ENCODE measurements at regions of chr1 and their contacts with region 1.

Region 1: DNA sequence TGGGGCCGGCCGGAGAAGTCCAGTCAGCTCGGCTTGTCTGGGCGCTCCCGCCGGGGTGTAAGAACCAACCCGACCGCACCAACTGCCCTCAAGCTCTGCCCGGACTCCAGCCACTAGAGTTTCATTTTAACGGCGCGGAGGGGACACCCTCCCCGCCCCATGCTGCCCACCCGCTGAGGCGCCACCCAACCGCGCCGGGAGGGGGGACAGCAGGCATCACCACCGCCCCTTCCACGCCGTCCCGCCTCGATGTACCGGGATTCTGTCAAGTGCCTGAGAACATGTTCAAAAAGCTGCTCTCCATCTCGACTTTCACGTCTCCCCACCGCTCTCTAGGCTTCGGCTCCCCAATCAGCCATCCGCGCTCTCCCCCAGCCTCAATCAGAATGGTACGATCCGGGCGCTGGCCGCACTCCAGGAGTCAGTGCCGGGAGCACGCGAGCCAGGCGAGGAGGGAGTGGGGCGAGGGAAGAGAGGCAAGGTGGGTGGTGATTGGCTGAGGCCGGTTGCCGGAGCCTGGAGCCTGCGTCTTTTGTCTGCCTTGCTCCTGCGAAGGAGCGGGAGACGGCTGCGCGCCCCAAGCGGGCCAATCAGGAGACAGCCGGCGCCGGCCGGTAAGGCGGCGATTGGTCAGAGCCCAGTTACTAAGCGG is at the start of gene PIK3R3:
- DNase-seq: peak; percentile 92
- ATAC-seq: peak; percentile 91
- H3K4me3 ChIP-seq: peak within 1 kb of the TSS; percentile 91
- H3K27ac ChIP-seq: peak within 1 kb of the TSS; percentile 98
- H3K4me1 ChIP-seq: peaks cover 16% of the 10 kb centered on the region
- H3K27me3 ChIP-seq: no peaks in the 10 kb centered on the region
- CTCF ChIP-seq: no peak
- EP300 ChIP-seq: peak; percentile 16 to 41; a peak in 2 of 4 replicates
- POLR2A ChIP-seq: peak; percentile 99
- RAD21 ChIP-seq: no peak
- polyA plus RNA-seq, gene PIK3R3: 4.8 to 7.4 TPM

Region 2: GRCh38 chr1:46043458-46044017 is 89.1 kb before region 1 on chr1:
- CTCF ChIA-PET with region 1: interaction called, 5 read pairs
- POLR2A ChIA-PET with region 1: interaction called, 14 read pairs
- RAD21 ChIA-PET with region 1: interaction called, 5 read pairs
- SMC1A ChIA-PET with region 1: interaction called, 37 read pairs
- in situ Hi-C with region 1: no loop called
- intact Hi-C with region 1: loop called (anchors 2 kb)
- DNase-seq: peak; percentile 92
- ATAC-seq: peak; percentile 97
- H3K4me3 ChIP-seq: no peak overlapping the region
- H3K27ac ChIP-seq: peak overlapping the region; percentile 80
- H3K4me1 ChIP-seq: peaks cover 35% of the 10 kb centered on the region
- H3K27me3 ChIP-seq: no peaks in the 10 kb centered on the region
- CTCF ChIP-seq: no peak
- EP300 ChIP-seq: peak in 1 of 2 experiments; percentile 54; a peak in 2 of 4 replicates
- POLR2A ChIP-seq: peak; percentile 52; the same call in 1 of the 2 replicates
- RAD21 ChIP-seq: no peak; the same call in 1 of the 2 replicates

Region 3: DNA sequence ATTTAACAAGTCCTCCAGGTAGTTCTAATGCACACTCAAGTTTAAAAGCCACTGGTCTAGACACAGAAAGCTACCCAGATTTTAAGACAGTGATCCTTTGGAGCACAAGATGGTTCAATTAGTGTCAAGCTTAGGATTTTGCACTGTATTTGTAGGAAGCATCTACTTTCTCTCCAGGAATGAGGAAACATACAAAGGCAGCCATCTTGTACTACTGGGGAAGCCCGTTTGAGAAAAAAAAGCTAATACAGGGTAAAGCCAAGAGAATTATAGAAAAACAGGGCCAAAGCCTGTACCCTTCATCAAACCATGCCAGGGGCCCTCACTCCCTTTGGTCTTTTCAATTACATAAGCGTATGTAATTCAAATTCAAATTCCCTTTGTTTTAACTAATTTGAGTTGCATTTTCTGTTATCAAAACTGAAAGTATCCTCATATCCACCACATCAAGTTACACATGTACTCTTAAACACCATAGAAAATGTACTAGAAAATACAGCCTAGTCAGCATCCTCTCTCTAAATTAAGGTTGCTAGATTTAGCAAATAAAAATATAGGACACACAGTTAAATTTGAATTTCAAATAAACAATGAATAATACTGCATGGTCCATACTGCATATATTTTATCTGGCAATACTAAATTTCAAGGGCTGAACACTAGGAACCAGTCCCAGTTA is 17.6 kb before region 1 on chr1:
- CTCF ChIA-PET with region 1: interaction called, 14 read pairs
- POLR2A ChIA-PET with region 1: interaction called, 14 read pairs
- RAD21 ChIA-PET with region 1: interaction called, 13 read pairs
- SMC1A ChIA-PET with region 1: interaction called, 14 read pairs
- in situ Hi-C with region 1: no loop called
- intact Hi-C with region 1: no loop called
- DNase-seq: no peak
- ATAC-seq: peak; percentile 35
- H3K4me3 ChIP-seq: no peak overlapping the region
- H3K27ac ChIP-seq: peak overlapping the region; percentile 4; the same call in 1 of the 2 replicates
- H3K4me1 ChIP-seq: peaks cover 7% of the 10 kb centered on the region; the same call in 1 of the 2 replicates
- H3K27me3 ChIP-seq: no peaks in the 10 kb centered on the region
- CTCF ChIP-seq: no peak
- EP300 ChIP-seq: no peak
- POLR2A ChIP-seq: no peak
- RAD21 ChIP-seq: no peak

Region 4: DNA sequence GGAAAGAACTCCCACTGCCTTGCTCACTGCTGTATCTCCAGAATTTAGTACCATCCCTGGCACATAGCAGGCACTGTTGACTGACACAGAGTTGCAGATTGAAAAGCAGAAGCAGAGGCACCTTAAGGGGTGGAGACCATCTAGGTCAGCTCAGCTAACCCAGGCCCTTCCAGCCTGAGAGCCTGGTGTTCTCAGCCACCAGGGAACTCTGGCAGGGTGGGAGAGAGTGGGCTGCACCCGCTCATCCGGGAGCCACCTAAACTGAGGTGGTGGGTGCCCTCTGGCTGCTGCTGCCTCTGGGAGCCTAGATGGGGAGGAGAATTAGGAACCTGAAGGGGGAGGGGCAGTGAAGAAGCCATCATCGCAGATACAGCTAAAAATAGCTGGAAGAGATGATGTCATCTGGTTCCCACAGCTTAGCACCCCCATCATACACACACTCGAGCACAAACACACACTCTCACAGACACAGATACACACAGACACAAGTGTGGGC is 40.8 kb after region 1 on chr1:
- CTCF ChIA-PET with region 1: interaction called, 7 read pairs
- POLR2A ChIA-PET with region 1: interaction called, 7 read pairs
- RAD21 ChIA-PET with region 1: interaction called, 5 read pairs
- SMC1A ChIA-PET with region 1: interaction called, 25 read pairs
- in situ Hi-C with region 1: no loop called
- intact Hi-C with region 1: loop called (anchors 2 kb)
- DNase-seq: no peak
- ATAC-seq: peak; percentile 51
- H3K4me3 ChIP-seq: no peak overlapping the region
- H3K27ac ChIP-seq: no peak overlapping the region
- H3K4me1 ChIP-seq: peaks cover 3% of the 10 kb centered on the region
- H3K27me3 ChIP-seq: no peaks in the 10 kb centered on the region; a peak in 1 of 4 replicates
- CTCF ChIP-seq: peak in 1 of 3 experiments; percentile 18; a peak in 1 of 6 replicates
- EP300 ChIP-seq: no peak
- POLR2A ChIP-seq: no peak
- RAD21 ChIP-seq: no peak

Region 5: GRCh38 chr1:46333300-46334029 is 200.8 kb after region 1 on chr1:
- CTCF ChIA-PET with region 1: no interaction called
- POLR2A ChIA-PET with region 1: interaction called, 3 read pairs
- RAD21 ChIA-PET with region 1: no interaction called
- SMC1A ChIA-PET with region 1: no interaction called
- in situ Hi-C with region 1: no loop called
- intact Hi-C with region 1: loop called (anchors 10 kb)
- DNase-seq: peak; percentile 77
- ATAC-seq: peak; percentile 58
- H3K4me3 ChIP-seq: peak overlapping the region; percentile 16; the same call in 1 of the 2 replicates
- H3K27ac ChIP-seq: peak overlapping the region; percentile 98
- H3K4me1 ChIP-seq: peaks cover 22% of the 10 kb centered on the region
- H3K27me3 ChIP-seq: no peaks in the 10 kb centered on the region
- CTCF ChIP-seq: peak; percentile 49 to 73 (median 53)
- EP300 ChIP-seq: 0 out of 4 replicates have a peak, but pooled peaks of 1 of the 2 experiments have one; percentile 17
- POLR2A ChIP-seq: peak; percentile 77
- RAD21 ChIP-seq: peak; percentile 70

Region 6: DNA sequence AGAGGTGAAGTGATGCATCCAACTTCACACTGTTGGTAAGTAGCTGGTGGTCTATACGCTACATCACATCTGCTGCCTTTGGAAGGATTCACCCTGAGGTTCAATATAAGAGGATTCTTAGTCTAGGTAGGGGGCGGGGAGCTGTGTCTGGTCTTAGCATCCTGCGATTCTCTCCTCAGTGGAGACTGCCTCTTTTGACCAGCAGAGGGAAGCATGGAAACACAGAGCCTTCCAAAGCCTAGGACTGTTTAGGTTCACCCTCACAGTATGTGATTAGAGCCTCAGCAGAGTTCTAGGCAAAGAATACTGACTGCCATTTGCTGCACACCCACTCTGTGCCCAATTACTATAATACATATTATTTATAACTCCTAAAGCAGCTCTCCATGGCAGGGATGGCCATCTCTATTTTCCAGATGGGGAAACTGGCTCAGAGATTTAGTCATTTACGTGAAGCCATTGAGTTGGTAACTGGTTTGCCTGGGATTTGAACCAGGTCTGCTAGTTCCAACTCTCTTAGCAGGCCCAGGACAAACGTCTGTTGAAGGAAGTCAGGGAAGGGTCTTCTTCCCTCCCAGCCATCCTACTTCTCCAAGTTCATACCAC is 615.1 kb after region 1 on chr1:
- CTCF ChIA-PET with region 1: no interaction called
- POLR2A ChIA-PET with region 1: no interaction called
- RAD21 ChIA-PET with region 1: no interaction called
- SMC1A ChIA-PET with region 1: no interaction called
- in situ Hi-C with region 1: no loop called
- intact Hi-C with region 1: no loop called
- DNase-seq: no peak
- ATAC-seq: peak; percentile 73
- H3K4me3 ChIP-seq: no peak overlapping the region
- H3K27ac ChIP-seq: no peak overlapping the region
- H3K4me1 ChIP-seq: no peaks in the 10 kb centered on the region
- H3K27me3 ChIP-seq: peaks cover 0 to 2% of the 10 kb centered on the region in 2 experiments; a peak in 2 of 4 replicates
- CTCF ChIP-seq: peak; percentile 22 to 40 (median 35); a peak in 3 of 6 replicates
- EP300 ChIP-seq: no peak
- POLR2A ChIP-seq: no peak
- RAD21 ChIP-seq: peak; percentile 25; the same call in 1 of the 2 replicates

Measured in GM12878 (cell line).